ENCODE measurements at regions of chr1 and their contacts with region 1.

Region 1: GRCh38 chr1:86507935-86508582 is 38.8 kb upstream of the CLCA4 start:
- DNase-seq: no peak
- H3K4me3 ChIP-seq: no peak overlapping the region; a peak in 1 of 8 replicates
- H3K27ac ChIP-seq: no peak overlapping the region
- H3K4me1 ChIP-seq: peaks cover 12 to 16% (median 14%) of the 10 kb centered on the region in 4 experiments
- H3K27me3 ChIP-seq: no peaks in the 10 kb centered on the region; a peak in 1 of 7 replicates
- CTCF ChIP-seq: peak in 2 of 3 experiments; percentile 58 to 59; a peak in 3 of 4 replicates
- EP300 ChIP-seq: no peak
- POLR2A ChIP-seq: no peak
- RAD21 ChIP-seq: peak; percentile 58 to 66

Region 2: GRCh38 chr1:86380257-86380861 is 127.7 kb before region 1 on chr1:
- CTCF ChIA-PET with region 1: interaction called, 12 read pairs
- POLR2A ChIA-PET with region 1: interaction called, 3 read pairs
- DNase-seq: no peak
- H3K4me3 ChIP-seq: no peak overlapping the region
- H3K27ac ChIP-seq: no peak overlapping the region
- H3K4me1 ChIP-seq: no peaks in the 10 kb centered on the region
- H3K27me3 ChIP-seq: no peaks in the 10 kb centered on the region
- CTCF ChIP-seq: peak in 2 of 3 experiments; percentile 64; a peak in 2 of 4 replicates
- EP300 ChIP-seq: no peak
- POLR2A ChIP-seq: no peak
- RAD21 ChIP-seq: peak; percentile 84 to 86

Region 3: DNA sequence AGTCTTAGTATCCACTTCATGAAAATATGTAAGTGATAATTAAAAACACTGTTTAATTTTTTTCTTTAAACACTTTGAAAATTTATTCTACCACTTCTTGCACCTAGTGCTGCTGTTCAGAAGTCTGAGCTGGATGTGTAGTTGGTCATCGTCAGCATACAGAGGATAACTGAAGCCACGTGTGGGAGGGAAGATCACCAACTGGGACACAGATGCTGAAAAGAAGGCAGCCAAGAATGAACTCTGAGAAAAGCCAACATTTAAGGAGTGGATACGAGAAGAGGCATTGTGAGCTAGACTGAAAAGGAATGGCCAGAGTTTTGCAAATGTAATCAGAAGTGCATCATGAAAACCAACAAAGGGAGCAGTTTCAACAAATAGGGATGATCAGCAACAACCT is 14.2 kb after region 1 on chr1:
- CTCF ChIA-PET with region 1: interaction called, 27 read pairs
- POLR2A ChIA-PET with region 1: no interaction called
- DNase-seq: no peak
- H3K4me3 ChIP-seq: no peak overlapping the region
- H3K27ac ChIP-seq: no peak overlapping the region
- H3K4me1 ChIP-seq: no peaks in the 10 kb centered on the region
- H3K27me3 ChIP-seq: no peaks in the 10 kb centered on the region
- CTCF ChIP-seq: no peak
- EP300 ChIP-seq: no peak
- POLR2A ChIP-seq: no peak
- RAD21 ChIP-seq: no peak